Caco-2 (cell line): ENCODE measurements at regions of chr2 and their contacts with region 1.

Region 1: GRCh38 chr2:46364797-46365457 is 67.7 kb downstream of the EPAS1 start:
- DNase-seq: peak in 1 of 2 experiments; percentile 68
- H3K4me3 ChIP-seq: no peak overlapping the region
- H3K4me3 Mint-ChIP-seq: no peak overlapping the region
- H3K27ac Mint-ChIP-seq: no peak overlapping the region
- H3K4me1 ChIP-seq: no peaks in the 10 kb centered on the region
- H3K4me1 Mint-ChIP-seq: no peaks in the 10 kb centered on the region
- H3K27me3 ChIP-seq: no peaks in the 10 kb centered on the region
- H3K27me3 Mint-ChIP-seq: no peaks in the 10 kb centered on the region
- CTCF ChIP-seq: peak; percentile 67 to 75

Region 2: DNA sequence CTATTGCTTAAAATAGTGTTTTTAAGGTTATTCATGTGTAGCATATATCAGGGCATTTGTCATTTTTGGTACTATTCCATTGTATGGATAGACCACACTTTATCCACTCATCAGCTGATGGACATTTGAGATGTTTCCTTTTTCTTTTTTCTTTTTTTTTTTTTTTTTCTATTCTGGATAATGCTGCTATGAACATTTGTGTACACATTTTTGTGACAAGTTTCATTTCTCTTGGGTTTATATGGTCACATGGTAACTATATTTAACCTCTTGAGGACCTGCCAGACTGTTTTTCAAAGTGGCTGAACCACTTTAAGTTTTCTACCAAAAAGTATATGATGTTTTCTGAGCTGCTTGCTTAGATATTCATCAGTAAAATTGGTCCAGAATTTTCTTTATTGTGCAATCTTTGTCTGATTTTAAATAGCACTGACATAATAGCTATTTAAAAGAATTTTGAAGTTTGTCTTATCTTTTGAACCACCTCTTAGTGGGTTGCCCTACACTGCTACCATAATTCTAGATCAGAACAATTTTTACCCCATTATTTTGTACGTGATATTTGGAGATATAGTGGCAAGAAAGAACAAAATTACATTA is 1642.8 kb before region 1 on chr2:
- CTCF ChIA-PET with region 1: no interaction called
- POLR2A ChIA-PET with region 1: no interaction called
- intact Hi-C with region 1: no loop called
- DNase-seq: no peak
- H3K4me3 ChIP-seq: no peak overlapping the region
- H3K4me3 Mint-ChIP-seq: no peak overlapping the region
- H3K27ac Mint-ChIP-seq: no peak overlapping the region
- H3K4me1 ChIP-seq: no peaks in the 10 kb centered on the region
- H3K4me1 Mint-ChIP-seq: peaks cover 6% of the 10 kb centered on the region
- H3K27me3 ChIP-seq: no peaks in the 10 kb centered on the region
- H3K27me3 Mint-ChIP-seq: no peaks in the 10 kb centered on the region
- CTCF ChIP-seq: no peak

Region 3: DNA sequence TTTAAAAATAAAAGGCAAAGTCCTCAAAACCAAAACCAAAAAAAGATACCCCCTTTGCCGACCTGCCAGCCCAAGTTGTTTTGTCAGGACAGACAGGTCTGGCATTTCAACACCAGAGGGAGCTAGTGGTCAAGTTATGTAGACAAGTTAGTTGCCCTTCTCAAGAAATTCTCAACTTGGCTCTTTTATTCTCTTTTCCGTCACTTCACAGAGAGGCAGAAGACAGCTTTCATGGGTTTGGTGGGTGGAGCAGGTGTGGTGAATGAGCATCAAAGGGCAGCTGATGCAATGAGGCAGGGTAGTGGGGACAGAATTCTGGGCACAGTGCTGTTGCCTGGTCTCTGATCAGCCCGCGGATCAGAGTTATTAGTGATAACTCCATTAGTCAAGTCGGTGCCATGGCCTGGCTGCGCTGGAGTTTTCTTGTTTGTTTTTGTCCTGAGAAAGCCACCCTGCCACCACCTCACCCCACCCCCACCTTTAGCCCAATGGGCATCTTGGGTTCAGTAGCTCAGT is 371.4 kb before region 1 on chr2:
- CTCF ChIA-PET with region 1: interaction called, 5 read pairs
- POLR2A ChIA-PET with region 1: no interaction called
- intact Hi-C with region 1: loop called (anchors 1 kb)
- DNase-seq: peak; percentile 71 to 82
- H3K4me3 ChIP-seq: no peak overlapping the region
- H3K4me3 Mint-ChIP-seq: no peak overlapping the region
- H3K27ac Mint-ChIP-seq: no peak overlapping the region
- H3K4me1 ChIP-seq: no peaks in the 10 kb centered on the region; the same call in 1 of the 2 replicates
- H3K4me1 Mint-ChIP-seq: peaks cover 12% of the 10 kb centered on the region
- H3K27me3 ChIP-seq: no peaks in the 10 kb centered on the region
- H3K27me3 Mint-ChIP-seq: no peaks in the 10 kb centered on the region
- CTCF ChIP-seq: peak; percentile 80 to 83

Region 4: DNA sequence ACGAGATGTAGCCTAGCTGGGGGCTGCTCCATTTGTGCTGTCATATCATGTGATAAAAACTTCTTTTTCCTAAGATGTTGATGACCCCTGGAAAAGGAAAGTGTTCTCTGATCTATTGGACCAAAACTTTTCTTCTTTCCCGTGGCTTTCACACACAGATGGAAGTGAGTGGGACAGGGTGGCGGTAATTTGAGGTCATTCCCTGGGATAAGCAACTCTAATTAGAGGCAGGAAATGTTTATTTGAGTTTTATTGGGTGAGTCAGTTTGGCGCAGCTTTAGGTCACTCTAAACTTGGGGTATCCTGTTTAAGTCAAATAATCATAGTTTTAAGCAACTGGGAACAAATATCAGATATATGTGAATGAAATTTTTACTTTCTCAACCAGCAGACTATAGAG is 288.7 kb before region 1 on chr2:
- CTCF ChIA-PET with region 1: no interaction called
- POLR2A ChIA-PET with region 1: no interaction called
- intact Hi-C with region 1: loop called (anchors 5 kb)
- DNase-seq: no peak
- H3K4me3 ChIP-seq: no peak overlapping the region
- H3K4me3 Mint-ChIP-seq: no peak overlapping the region
- H3K27ac Mint-ChIP-seq: no peak overlapping the region
- H3K4me1 ChIP-seq: peaks cover 16% of the 10 kb centered on the region
- H3K4me1 Mint-ChIP-seq: peaks cover 19% of the 10 kb centered on the region
- H3K27me3 ChIP-seq: no peaks in the 10 kb centered on the region
- H3K27me3 Mint-ChIP-seq: no peaks in the 10 kb centered on the region
- CTCF ChIP-seq: no peak

Region 5: GRCh38 chr2:46306330-46306751 is 58.6 kb before region 1 on chr2:
- CTCF ChIA-PET with region 1: no interaction called
- POLR2A ChIA-PET with region 1: no interaction called
- intact Hi-C with region 1: loop called (anchors 2 kb)
- DNase-seq: peak in 1 of 2 experiments; percentile 42
- H3K4me3 ChIP-seq: no peak overlapping the region
- H3K4me3 Mint-ChIP-seq: no peak overlapping the region
- H3K27ac Mint-ChIP-seq: peak overlapping the region; percentile 49
- H3K4me1 ChIP-seq: peaks cover 72% of the 10 kb centered on the region
- H3K4me1 Mint-ChIP-seq: peaks cover 75% of the 10 kb centered on the region
- H3K27me3 ChIP-seq: no peaks in the 10 kb centered on the region
- H3K27me3 Mint-ChIP-seq: no peaks in the 10 kb centered on the region
- CTCF ChIP-seq: no peak

Region 6: GRCh38 chr2:46461011-46461674 is 96.2 kb after region 1 on chr2:
- CTCF ChIA-PET with region 1: no interaction called
- POLR2A ChIA-PET with region 1: no interaction called
- intact Hi-C with region 1: loop called (anchors 2 kb)
- DNase-seq: peak; percentile 63 to 88
- H3K4me3 ChIP-seq: no peak overlapping the region
- H3K4me3 Mint-ChIP-seq: no peak overlapping the region
- H3K27ac Mint-ChIP-seq: peak overlapping the region; percentile 12
- H3K4me1 ChIP-seq: no peaks in the 10 kb centered on the region
- H3K4me1 Mint-ChIP-seq: peaks cover 5% of the 10 kb centered on the region
- H3K27me3 ChIP-seq: no peaks in the 10 kb centered on the region
- H3K27me3 Mint-ChIP-seq: no peaks in the 10 kb centered on the region
- CTCF ChIP-seq: peak; percentile 97 to 98